ENCODE measurements at regions of chr7 and their contacts with region 1.

Region 1: GRCh38 chr7:113421696-113422330 is 303.5 kb upstream of the SMIM30 start:
- DNase-seq: peak; percentile 83 to 86
- H3K4me3 ChIP-seq: no peak overlapping the region
- H3K27ac ChIP-seq: no peak overlapping the region
- H3K4me1 ChIP-seq: no peaks in the 10 kb centered on the region
- H3K27me3 ChIP-seq: no peaks in the 10 kb centered on the region
- CTCF ChIP-seq: peak in 5 of 6 experiments; percentile 66 to 93 (median 82)
- POLR2A ChIP-seq: no peak

Region 2: GRCh38 chr7:112550468-112551060 is 871.2 kb before region 1 on chr7:
- intact Hi-C with region 1: loop called (anchors 10 kb)
- DNase-seq: no peak
- H3K4me3 ChIP-seq: no peak overlapping the region
- H3K27ac ChIP-seq: no peak overlapping the region
- H3K4me1 ChIP-seq: no peaks in the 10 kb centered on the region
- H3K27me3 ChIP-seq: no peaks in the 10 kb centered on the region
- CTCF ChIP-seq: peak; percentile 71 to 95 (median 84)
- POLR2A ChIP-seq: no peak

Region 3: GRCh38 chr7:113015032-113015645 is 406.7 kb before region 1 on chr7:
- intact Hi-C with region 1: loop called (anchors 10 kb)
- DNase-seq: no peak
- H3K4me3 ChIP-seq: no peak overlapping the region
- H3K27ac ChIP-seq: no peak overlapping the region
- H3K4me1 ChIP-seq: no peaks in the 10 kb centered on the region
- H3K27me3 ChIP-seq: no peaks in the 10 kb centered on the region
- CTCF ChIP-seq: peak in 3 of 6 experiments; percentile 36 to 40 (median 36)
- POLR2A ChIP-seq: no peak

Region 4: DNA sequence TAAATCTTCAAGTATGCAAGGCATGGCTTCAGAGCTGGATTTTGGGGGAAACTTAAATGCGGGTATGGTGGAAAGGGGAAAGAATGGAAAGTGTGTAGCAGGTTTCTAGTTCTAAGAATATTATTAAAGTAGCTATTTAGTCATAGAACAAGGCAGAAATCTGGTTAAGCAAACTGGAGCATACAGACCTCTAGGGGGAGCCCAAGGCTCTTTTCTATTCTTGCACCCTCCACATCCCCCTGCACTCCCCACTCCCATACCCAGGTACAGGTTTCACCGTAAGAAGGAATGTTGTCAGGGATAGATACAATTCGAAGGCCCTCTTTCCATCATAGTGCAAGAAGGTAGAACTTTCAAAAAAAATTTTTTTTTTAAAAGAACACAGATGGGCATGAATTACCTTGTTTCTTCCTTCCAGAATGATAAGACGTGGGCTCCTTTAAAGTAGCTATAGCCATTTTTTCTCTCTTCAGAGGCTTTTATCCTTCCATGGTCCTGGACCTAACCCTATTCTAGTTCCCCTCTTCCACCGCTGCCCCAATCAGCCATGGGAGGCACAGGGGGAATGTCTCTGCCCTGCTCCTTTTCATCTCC is 262.0 kb before region 1 on chr7:
- intact Hi-C with region 1: loop called (anchors 5 kb)
- DNase-seq: peak; percentile 16 to 26
- H3K4me3 ChIP-seq: no peak overlapping the region
- H3K27ac ChIP-seq: no peak overlapping the region
- H3K4me1 ChIP-seq: no peaks in the 10 kb centered on the region
- H3K27me3 ChIP-seq: no peaks in the 10 kb centered on the region
- CTCF ChIP-seq: peak in 5 of 6 experiments; percentile 21 to 60 (median 56)
- POLR2A ChIP-seq: no peak

Region 5: GRCh38 chr7:113521468-113521867 is 99.7 kb after region 1 on chr7:
- intact Hi-C with region 1: no loop called
- DNase-seq: no peak
- H3K4me3 ChIP-seq: no peak overlapping the region
- H3K27ac ChIP-seq: no peak overlapping the region
- H3K4me1 ChIP-seq: no peaks in the 10 kb centered on the region
- H3K27me3 ChIP-seq: no peaks in the 10 kb centered on the region
- CTCF ChIP-seq: no peak
- POLR2A ChIP-seq: no peak

Region 6: GRCh38 chr7:114026486-114027089 is 604.8 kb after region 1 on chr7:
- intact Hi-C with region 1: no loop called
- DNase-seq: no peak
- H3K4me3 ChIP-seq: no peak overlapping the region
- H3K27ac ChIP-seq: no peak overlapping the region
- H3K4me1 ChIP-seq: no peaks in the 10 kb centered on the region
- H3K27me3 ChIP-seq: no peaks in the 10 kb centered on the region
- CTCF ChIP-seq: peak; percentile 13 to 66 (median 40)
- POLR2A ChIP-seq: no peak